ENCODE measurements at regions of chr16 and their contacts with region 1.

Region 1: DNA sequence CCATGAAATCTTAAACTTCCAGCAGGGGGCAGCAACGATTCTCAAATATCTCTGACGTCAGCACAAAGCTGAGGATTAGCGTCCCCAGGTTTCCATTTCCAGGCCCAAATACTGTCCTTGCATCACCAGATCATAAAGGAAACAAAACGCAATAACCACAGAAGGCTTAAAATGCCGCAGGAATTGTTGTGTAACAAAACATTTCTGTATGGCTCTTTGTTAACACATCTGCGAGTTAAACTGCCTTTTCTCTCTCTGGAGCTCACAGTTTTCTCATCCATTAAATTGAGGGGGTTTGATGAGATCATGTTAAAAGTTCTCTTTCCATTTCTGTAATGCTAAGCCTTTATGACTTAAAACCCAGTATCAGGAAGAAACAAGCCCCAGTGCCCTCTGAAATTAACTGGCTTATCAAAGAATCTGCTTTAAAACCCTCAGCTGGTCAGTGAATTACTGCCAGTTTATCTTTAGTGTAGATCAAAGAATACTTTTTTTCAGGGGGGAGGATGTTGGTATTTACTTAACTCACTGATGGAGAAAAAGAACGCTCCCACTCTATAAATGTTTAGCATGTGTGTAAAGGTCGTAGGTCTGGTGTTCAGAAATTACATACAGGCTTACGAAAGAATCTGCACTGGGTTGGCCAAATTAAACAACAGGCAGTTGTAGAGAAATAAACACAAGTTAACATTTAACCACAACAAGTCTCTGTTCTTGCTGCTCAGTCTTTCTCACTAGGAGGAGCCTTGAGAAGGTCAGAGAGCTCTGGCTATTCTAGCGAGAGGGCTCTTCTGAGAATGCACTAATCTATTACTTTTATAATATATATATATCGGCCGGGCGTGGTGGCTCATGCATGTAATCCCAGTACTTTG is 10.6 kb upstream of the TERF2 start:
- DNase-seq: peak; percentile 56
- CTCF ChIP-seq: peak; percentile 37

Region 2: DNA sequence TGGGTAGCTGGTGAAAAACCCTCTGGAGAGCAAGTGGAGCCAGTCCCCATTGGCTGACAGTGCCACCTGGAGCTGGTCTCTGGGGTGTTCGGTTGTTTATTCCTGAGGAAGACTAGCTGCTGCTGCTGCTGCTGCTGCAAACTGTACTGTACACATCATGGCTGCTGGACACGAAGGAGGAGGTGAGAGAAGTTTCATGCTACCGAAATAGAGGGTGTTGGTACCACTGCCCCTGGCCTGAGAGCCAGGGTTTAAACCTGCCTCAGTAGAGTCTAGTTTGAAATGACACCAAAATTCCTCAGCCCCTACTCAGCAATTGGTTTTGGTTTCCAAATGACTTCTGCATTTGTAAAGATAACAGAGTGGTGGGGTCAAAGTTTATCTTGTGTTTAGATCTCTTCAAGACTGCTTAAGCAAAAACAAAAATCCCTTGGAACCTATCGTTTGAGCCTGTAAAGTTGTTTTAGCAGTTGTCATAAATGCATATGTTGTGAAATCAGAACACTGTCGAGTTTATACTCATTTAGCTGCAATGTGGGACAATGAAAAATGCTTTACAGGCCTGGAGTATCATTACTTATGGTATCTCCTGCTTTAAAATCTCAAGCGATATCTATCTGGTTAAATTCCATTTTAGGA is 68.8 kb after region 1 on chr16:
- in situ Hi-C with region 1: no loop called
- DNase-seq: no peak
- CTCF ChIP-seq: no peak

Region 3: GRCh38 chr16:69565671-69566239 is 169.3 kb after region 1 on chr16 and contains the start of gene NFAT5:
- in situ Hi-C with region 1: loop called (anchors 10 kb)
- DNase-seq: peak; percentile 88
- CTCF ChIP-seq: no peak

Region 4: GRCh38 chr16:69660166-69660565 is 263.7 kb after region 1 on chr16:
- in situ Hi-C with region 1: no loop called
- DNase-seq: no peak
- CTCF ChIP-seq: no peak

Measured in GM13976 (cell line).